WTC11 (cell line): ENCODE measurements at regions of chr11 and their contacts with region 1.

Region 1: GRCh38 chr11:116513894-116514293 is 258.9 kb downstream of the BUD13 start:
- DNase-seq: peak; percentile 87
- ATAC-seq: peak; percentile 79
- H3K4me3 Mint-ChIP-seq: no peak overlapping the region
- H3K27ac Mint-ChIP-seq: no peak overlapping the region
- H3K4me1 Mint-ChIP-seq: peaks cover 29% of the 10 kb centered on the region
- H3K27me3 Mint-ChIP-seq: peaks cover under 1% of the 10 kb centered on the region
- CTCF ChIP-seq: peak; percentile 58

Region 2: GRCh38 chr11:116420770-116421528 is 92.9 kb before region 1 on chr11:
- CTCF ChIA-PET with region 1: interaction called, 16 read pairs
- POLR2A ChIA-PET with region 1: no interaction called
- DNase-seq: no peak
- ATAC-seq: no peak
- H3K4me3 Mint-ChIP-seq: no peak overlapping the region
- H3K27ac Mint-ChIP-seq: no peak overlapping the region
- H3K4me1 Mint-ChIP-seq: peaks cover 39% of the 10 kb centered on the region
- H3K27me3 Mint-ChIP-seq: peaks cover 2% of the 10 kb centered on the region; the same call in 1 of the 2 replicates
- CTCF ChIP-seq: no peak

Region 3: GRCh38 chr11:116525961-116526495 is 12.1 kb after region 1 on chr11:
- CTCF ChIA-PET with region 1: interaction called, 29 read pairs
- POLR2A ChIA-PET with region 1: no interaction called
- DNase-seq: no peak
- ATAC-seq: peak; percentile 18; the same call in 1 of the 2 replicates
- H3K4me3 Mint-ChIP-seq: no peak overlapping the region
- H3K27ac Mint-ChIP-seq: no peak overlapping the region
- H3K4me1 Mint-ChIP-seq: no peaks in the 10 kb centered on the region; the same call in 1 of the 2 replicates
- H3K27me3 Mint-ChIP-seq: peaks cover 10% of the 10 kb centered on the region; the same call in 1 of the 2 replicates
- CTCF ChIP-seq: no peak

Region 4: GRCh38 chr11:116665523-116665922 is 151.6 kb after region 1 on chr11:
- CTCF ChIA-PET with region 1: no interaction called
- POLR2A ChIA-PET with region 1: no interaction called
- DNase-seq: no peak
- ATAC-seq: no peak
- H3K4me3 Mint-ChIP-seq: no peak overlapping the region
- H3K27ac Mint-ChIP-seq: no peak overlapping the region
- H3K4me1 Mint-ChIP-seq: no peaks in the 10 kb centered on the region; the same call in 1 of the 2 replicates
- H3K27me3 Mint-ChIP-seq: peaks cover 41% of the 10 kb centered on the region
- CTCF ChIP-seq: no peak